ENCODE measurements at regions of chr11 and their contacts with region 1.

Region 1: GRCh38 chr11:108647701-108648527 is 17.0 kb upstream of the DDX10 start:
- DNase-seq: peak; percentile 83
- ATAC-seq: peak; percentile 93
- H3K4me3 Mint-ChIP-seq: no peak overlapping the region
- H3K27ac Mint-ChIP-seq: no peak overlapping the region
- H3K4me1 Mint-ChIP-seq: no peaks in the 10 kb centered on the region
- H3K27me3 Mint-ChIP-seq: no peaks in the 10 kb centered on the region
- CTCF ChIP-seq: peak; percentile 74

Region 2: GRCh38 chr11:108117746-108118371 is 530.1 kb before region 1 on chr11:
- CTCF ChIA-PET with region 1: interaction called, 22 read pairs
- POLR2A ChIA-PET with region 1: no interaction called
- intact Hi-C with region 1: loop called (anchors 5 kb)
- DNase-seq: no peak
- ATAC-seq: no peak
- H3K4me3 Mint-ChIP-seq: no peak overlapping the region
- H3K27ac Mint-ChIP-seq: no peak overlapping the region
- H3K4me1 Mint-ChIP-seq: peaks cover 16% of the 10 kb centered on the region
- H3K27me3 Mint-ChIP-seq: no peaks in the 10 kb centered on the region
- CTCF ChIP-seq: peak; percentile 62

Region 3: DNA sequence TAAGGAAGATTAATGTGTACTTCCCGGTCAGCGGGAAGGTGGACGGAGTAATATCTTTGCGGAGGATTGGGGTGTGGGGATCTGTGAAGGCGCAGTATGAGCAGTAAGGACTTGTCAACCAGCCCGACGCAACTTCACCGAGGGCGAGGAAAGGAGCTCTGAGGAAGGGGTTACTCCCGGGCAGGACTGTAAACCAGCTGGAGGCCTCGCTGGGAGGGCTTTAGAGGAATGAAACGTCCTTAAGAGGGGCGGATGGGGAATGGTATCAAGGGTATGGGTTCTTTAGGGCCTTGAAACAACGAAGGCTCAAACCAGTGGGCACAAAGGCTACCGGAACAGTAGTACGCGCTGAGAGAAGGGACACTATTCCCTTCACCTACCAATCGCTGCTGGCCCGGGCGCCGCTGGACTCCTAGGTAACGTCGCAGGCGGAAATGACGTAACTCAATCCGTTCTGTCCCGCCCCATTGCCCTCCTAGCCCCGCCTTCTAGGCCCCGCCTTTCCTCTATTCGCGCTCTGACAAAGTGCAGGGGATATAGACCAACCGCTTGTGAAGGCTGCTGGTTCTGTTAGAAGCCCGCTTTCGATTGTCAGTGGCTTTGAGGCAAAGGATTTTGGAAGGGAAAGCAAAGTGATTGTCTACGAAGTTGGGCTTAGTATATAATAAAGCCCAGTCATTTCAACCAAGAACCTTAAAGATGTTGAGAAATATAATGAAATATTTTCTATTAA is 180.7 kb before region 1 on chr11 and contains the start of gene C11orf65:
- CTCF ChIA-PET with region 1: no interaction called
- POLR2A ChIA-PET with region 1: no interaction called
- intact Hi-C with region 1: no loop called
- DNase-seq: peak; percentile 98
- ATAC-seq: peak; percentile 99
- H3K4me3 Mint-ChIP-seq: peak within 1 kb of the TSS; percentile 92
- H3K27ac Mint-ChIP-seq: peak within 1 kb of the TSS; percentile 98
- H3K4me1 Mint-ChIP-seq: no peaks in the 10 kb centered on the region
- H3K27me3 Mint-ChIP-seq: no peaks in the 10 kb centered on the region
- CTCF ChIP-seq: no peak
- total RNA-seq, gene C11orf65: 1.1 to 2.3 TPM

Region 4: DNA sequence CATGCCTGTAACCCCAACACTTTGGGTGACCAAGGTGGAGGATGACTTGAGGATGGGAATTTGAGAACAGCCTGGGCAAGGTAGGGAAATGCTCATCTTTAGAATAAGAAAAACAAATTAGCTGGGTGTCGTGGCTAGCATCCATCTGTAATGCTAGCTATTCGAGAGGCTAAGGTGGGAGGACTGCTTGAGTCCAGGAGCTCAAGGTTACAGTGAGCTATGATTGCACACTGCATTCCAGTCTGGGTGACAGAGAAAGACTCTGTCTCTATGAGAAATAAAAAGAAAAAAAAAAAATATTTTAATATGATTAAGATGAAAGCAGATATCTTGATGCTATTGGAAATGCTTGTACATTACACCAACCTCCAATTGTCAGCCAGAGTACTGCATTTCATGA is 11.7 kb before region 1 on chr11:
- CTCF ChIA-PET with region 1: interaction called, 34 read pairs
- POLR2A ChIA-PET with region 1: no interaction called
- intact Hi-C with region 1: no loop called
- DNase-seq: no peak
- ATAC-seq: no peak
- H3K4me3 Mint-ChIP-seq: no peak overlapping the region
- H3K27ac Mint-ChIP-seq: no peak overlapping the region
- H3K4me1 Mint-ChIP-seq: no peaks in the 10 kb centered on the region
- H3K27me3 Mint-ChIP-seq: peaks cover 16% of the 10 kb centered on the region
- CTCF ChIP-seq: no peak

Region 5: GRCh38 chr11:108713076-108713790 is 65.3 kb after region 1 on chr11:
- CTCF ChIA-PET with region 1: no interaction called
- POLR2A ChIA-PET with region 1: no interaction called
- intact Hi-C with region 1: no loop called
- DNase-seq: no peak
- ATAC-seq: peak; percentile 20
- H3K4me3 Mint-ChIP-seq: no peak overlapping the region
- H3K27ac Mint-ChIP-seq: peak overlapping the region; percentile 57
- H3K4me1 Mint-ChIP-seq: peaks cover 20% of the 10 kb centered on the region
- H3K27me3 Mint-ChIP-seq: no peaks in the 10 kb centered on the region
- CTCF ChIP-seq: no peak

Region 6: GRCh38 chr11:108847298-108847697 is 199.4 kb after region 1 on chr11:
- CTCF ChIA-PET with region 1: no interaction called
- POLR2A ChIA-PET with region 1: no interaction called
- intact Hi-C with region 1: no loop called
- DNase-seq: no peak
- ATAC-seq: no peak
- H3K4me3 Mint-ChIP-seq: no peak overlapping the region
- H3K27ac Mint-ChIP-seq: no peak overlapping the region
- H3K4me1 Mint-ChIP-seq: peaks cover under 1% of the 10 kb centered on the region
- H3K27me3 Mint-ChIP-seq: no peaks in the 10 kb centered on the region
- CTCF ChIP-seq: no peak

Measured in activated CD8-positive, alpha-beta T cell treated with anti-CD3 and anti-CD28 coated beads for 36 hours (primary cell).